ENCODE measurements at regions of chr2 and their contacts with region 1.

Region 1: GRCh38 chr2:64523666-64524603 is at the start of gene AFTPH:
- DNase-seq: peak; percentile 98
- ATAC-seq: peak; percentile 86
- H3K4me3 ChIP-seq: peak within 1 kb of the TSS; percentile 95
- H3K27ac ChIP-seq: peak within 1 kb of the TSS; percentile 94
- H3K4me1 ChIP-seq: peaks cover 11% of the 10 kb centered on the region
- H3K27me3 ChIP-seq: no peaks in the 10 kb centered on the region
- CTCF ChIP-seq: no peak
- EP300 ChIP-seq: peak in 1 of 2 experiments; percentile 53; a peak in 2 of 4 replicates
- POLR2A ChIP-seq: peak; percentile 84
- RAD21 ChIP-seq: no peak
- polyA plus RNA-seq, gene AFTPH: 25.6 to 38.7 TPM

Region 2: DNA sequence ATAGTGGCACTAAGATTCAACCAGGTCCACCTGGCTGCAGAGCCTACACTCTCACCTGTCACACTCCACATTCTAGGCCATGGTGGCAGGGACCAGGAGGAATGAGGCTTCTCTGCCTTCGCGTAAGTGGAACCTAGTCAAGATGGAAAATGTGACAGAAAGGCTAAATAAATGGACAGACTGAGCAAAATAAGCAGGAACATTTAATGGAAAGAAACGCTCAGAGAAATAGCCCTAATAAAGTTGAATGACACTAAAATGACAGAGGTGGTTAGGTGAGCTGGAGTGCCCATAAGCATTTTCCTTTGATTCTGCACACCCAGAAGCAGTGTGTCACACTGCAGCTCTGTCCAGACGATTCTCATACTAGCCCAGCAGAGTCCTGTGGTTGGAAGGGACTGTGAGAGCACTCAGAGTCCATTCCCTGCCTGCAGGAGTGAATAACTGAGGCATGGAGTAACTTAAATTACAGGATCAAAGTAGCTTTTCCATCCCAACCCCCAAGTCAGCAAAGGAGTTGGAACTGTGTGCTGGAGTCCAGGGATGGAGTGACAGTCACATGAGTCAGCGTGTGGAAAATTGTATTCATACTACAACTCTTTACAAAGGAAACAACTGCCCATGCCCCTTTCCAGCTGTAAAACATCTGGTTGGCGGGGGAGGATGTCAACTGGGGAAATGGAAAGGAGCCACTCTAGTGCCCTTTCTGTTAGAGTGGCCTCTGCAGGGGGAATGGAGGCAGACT is 175.4 kb before region 1 on chr2:
- CTCF ChIA-PET with region 1: no interaction called
- POLR2A ChIA-PET with region 1: no interaction called
- RAD21 ChIA-PET with region 1: no interaction called
- SMC1A ChIA-PET with region 1: no interaction called
- in situ Hi-C with region 1: no loop called
- intact Hi-C with region 1: no loop called
- DNase-seq: no peak
- ATAC-seq: no peak
- H3K4me3 ChIP-seq: no peak overlapping the region
- H3K27ac ChIP-seq: no peak overlapping the region
- H3K4me1 ChIP-seq: no peaks in the 10 kb centered on the region
- H3K27me3 ChIP-seq: no peaks in the 10 kb centered on the region
- CTCF ChIP-seq: no peak
- EP300 ChIP-seq: no peak
- POLR2A ChIP-seq: no peak
- RAD21 ChIP-seq: no peak

Region 3: DNA sequence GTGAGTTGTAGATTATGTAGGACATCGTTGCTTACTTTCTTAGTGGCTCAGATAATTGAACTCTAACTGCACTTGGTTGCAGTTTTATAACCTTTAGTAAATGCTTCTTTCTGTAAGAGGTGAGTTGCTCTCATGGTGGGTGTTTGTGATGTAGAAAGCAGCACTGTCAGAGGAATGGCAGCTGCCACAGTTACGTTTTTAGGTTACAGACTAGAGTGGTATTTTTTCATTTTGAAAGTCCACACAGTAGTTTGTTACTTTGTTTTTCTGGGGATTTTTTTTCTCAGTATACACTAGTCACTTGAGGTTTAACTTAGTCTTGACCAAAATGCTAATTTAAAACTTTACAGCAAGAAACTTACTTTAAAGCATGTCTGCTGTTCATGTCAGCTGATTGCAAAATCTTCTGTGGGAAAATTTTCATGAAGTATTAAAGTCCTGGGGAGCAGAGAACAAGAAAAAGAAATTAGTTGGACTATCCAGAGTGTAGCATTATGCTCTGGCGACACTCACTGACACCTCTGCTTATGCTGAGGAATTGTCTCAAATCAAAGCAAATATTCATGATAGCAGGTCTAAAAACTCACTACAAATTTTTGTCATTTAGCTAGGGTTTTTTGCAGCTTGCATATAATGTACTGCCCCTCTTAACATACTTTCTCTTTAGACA is 15.0 kb after region 1 on chr2:
- CTCF ChIA-PET with region 1: interaction called, 39 read pairs
- POLR2A ChIA-PET with region 1: interaction called, 15 read pairs
- RAD21 ChIA-PET with region 1: interaction called, 48 read pairs
- SMC1A ChIA-PET with region 1: interaction called, 59 read pairs
- in situ Hi-C with region 1: no loop called
- intact Hi-C with region 1: no loop called
- DNase-seq: peak; percentile 49
- ATAC-seq: peak; percentile 57
- H3K4me3 ChIP-seq: peak overlapping the region; percentile 14; the same call in 1 of the 2 replicates
- H3K27ac ChIP-seq: peak overlapping the region; percentile 71
- H3K4me1 ChIP-seq: peaks cover 48% of the 10 kb centered on the region; the same call in 1 of the 2 replicates
- H3K27me3 ChIP-seq: no peaks in the 10 kb centered on the region
- CTCF ChIP-seq: no peak
- EP300 ChIP-seq: no peak
- POLR2A ChIP-seq: no peak
- RAD21 ChIP-seq: no peak

Region 4: GRCh38 chr2:64574871-64575270 is 50.9 kb after region 1 on chr2:
- CTCF ChIA-PET with region 1: interaction called, 64 read pairs
- POLR2A ChIA-PET with region 1: interaction called, 6 read pairs
- RAD21 ChIA-PET with region 1: interaction called, 6 read pairs
- SMC1A ChIA-PET with region 1: interaction called, 8 read pairs
- in situ Hi-C with region 1: no loop called
- intact Hi-C with region 1: no loop called
- DNase-seq: no peak
- ATAC-seq: no peak
- H3K4me3 ChIP-seq: no peak overlapping the region
- H3K27ac ChIP-seq: no peak overlapping the region
- H3K4me1 ChIP-seq: no peaks in the 10 kb centered on the region
- H3K27me3 ChIP-seq: no peaks in the 10 kb centered on the region
- CTCF ChIP-seq: no peak
- EP300 ChIP-seq: no peak
- POLR2A ChIP-seq: no peak
- RAD21 ChIP-seq: no peak

Region 5: DNA sequence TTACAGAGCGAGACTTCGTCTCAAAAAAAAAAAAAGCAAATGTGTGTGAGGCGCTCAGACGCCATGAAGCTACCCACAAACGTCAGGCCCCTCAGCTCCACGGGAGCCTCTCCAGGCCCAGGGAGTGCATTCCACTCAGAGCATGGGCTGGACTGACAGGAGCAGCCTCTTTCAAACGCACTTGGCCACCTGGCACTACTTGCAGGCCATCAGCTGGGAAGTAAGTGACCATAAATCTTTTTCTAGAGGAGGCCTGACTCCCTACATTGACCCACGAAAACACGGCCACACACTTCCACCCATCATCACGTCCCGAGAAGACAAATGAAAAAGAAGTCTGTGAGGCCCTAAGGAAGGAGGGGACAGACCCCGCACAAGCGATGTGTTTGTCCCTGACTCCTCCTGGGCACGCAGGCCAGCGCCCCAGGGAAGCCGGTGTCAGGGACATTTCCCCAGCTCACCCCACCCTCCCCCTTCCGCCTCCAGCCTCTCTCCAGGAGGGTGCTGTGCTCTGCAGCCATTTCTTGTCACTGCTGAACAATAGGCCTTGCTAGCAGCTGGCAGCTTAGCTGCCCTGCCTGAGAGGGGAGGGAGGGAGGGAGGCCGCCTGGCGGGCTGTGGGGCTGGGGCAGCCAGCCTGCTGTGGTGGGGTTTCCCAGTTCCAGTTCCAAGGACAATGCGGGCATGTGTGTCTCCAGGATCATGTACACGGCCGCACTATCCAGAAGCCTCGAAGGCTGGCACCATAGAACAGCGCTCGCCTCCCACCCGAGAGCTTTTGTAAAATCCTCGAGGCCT is 103.2 kb after region 1 on chr2:
- CTCF ChIA-PET with region 1: interaction called, 13 read pairs
- POLR2A ChIA-PET with region 1: no interaction called
- RAD21 ChIA-PET with region 1: interaction called, 3 read pairs
- SMC1A ChIA-PET with region 1: interaction called, 3 read pairs
- in situ Hi-C with region 1: no loop called
- intact Hi-C with region 1: no loop called
- DNase-seq: no peak
- ATAC-seq: no peak
- H3K4me3 ChIP-seq: no peak overlapping the region
- H3K27ac ChIP-seq: no peak overlapping the region
- H3K4me1 ChIP-seq: peaks cover 8% of the 10 kb centered on the region
- H3K27me3 ChIP-seq: no peaks in the 10 kb centered on the region
- CTCF ChIP-seq: no peak
- EP300 ChIP-seq: no peak
- POLR2A ChIP-seq: no peak
- RAD21 ChIP-seq: no peak

Region 6: DNA sequence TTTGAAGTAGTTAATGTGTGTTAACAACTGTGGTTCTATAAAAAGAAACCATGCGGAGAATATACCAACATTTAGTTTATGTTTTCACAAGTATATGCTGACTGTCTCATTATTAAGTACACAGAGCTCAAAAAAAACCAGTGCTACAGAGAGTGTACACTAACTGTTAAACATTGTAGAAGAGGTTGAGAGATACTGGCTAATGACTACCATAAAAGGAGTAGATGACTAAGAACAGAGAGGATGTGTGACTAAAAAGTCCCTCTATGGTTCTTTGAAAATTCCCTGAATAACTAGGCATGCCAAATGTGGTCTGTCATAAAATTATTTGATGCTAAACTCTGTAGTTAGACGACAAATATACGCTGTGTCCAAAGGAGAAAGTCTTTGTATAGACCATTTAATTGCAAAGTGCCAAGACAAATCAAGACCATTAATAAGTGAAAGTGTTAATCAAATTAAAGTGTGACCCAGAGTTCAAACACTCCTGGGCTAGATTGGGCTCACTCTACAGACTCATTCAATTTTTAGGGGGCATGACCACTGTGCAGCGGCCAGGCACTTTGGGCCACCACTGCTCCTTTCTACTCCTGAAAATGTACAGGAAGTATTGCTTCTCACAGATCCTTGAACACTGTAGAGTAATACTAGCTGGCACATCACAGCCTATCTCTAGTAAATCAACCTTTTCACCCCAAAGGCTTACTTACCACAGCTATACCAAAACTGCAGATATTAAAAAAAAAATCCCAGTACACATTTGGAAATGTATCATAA is 174.9 kb after region 1 on chr2:
- CTCF ChIA-PET with region 1: interaction called, 4 read pairs
- POLR2A ChIA-PET with region 1: interaction called, 4 read pairs
- RAD21 ChIA-PET with region 1: interaction called, 4 read pairs
- SMC1A ChIA-PET with region 1: interaction called, 12 read pairs
- in situ Hi-C with region 1: no loop called
- intact Hi-C with region 1: loop called (anchors 2 kb)
- DNase-seq: peak; percentile 83
- ATAC-seq: peak; percentile 90
- H3K4me3 ChIP-seq: no peak overlapping the region; the same call in 1 of the 2 replicates
- H3K27ac ChIP-seq: peak overlapping the region; percentile 98
- H3K4me1 ChIP-seq: peaks cover 53% of the 10 kb centered on the region
- H3K27me3 ChIP-seq: no peaks in the 10 kb centered on the region
- CTCF ChIP-seq: no peak
- EP300 ChIP-seq: peak; percentile 41 to 84; a peak in 2 of 4 replicates
- POLR2A ChIP-seq: no peak
- RAD21 ChIP-seq: no peak

Region 7: DNA sequence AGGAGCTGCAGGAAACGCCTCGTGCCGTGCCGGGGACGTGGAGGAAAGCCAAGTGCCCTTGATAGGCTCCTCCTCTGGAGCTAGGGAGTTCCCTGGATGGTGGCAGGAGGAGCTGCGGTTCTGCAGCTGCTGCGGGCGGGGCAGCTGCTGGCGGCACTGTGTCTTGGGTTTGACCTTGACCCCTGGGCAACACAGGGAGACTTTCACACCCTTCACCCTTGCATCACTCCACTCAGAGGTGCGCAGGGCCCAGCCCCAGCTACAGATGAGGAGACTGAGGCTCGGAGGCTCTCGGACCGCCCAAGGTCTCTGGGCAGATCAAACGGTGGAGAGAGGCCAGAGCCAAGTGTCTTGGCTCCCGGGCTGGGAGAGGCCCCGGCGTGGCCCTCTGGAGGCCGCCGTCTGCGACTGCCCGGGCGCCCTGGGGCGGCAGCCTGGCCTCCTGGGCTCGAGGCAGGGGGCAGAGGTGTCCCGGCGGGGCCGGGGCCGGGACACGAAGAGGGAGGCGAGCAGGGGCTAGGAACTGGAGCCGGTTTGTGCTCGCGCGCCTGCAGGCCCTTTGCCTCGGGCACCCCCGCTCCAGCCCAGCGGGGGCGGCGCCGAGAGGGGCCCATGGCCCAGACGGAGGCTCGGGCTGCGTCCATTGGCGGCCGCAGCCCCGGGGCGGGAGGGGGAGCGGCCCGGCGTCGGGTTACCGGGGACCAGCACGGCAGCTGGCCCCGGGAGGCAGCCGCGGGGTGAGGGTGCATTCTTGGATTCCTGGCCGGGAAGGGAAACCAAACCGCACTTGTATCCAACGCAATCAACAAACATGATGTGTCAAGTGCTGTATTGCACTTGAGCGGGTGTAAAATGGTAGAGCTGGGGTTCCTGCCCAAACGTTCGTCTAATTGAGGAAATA is 335.6 kb after region 1 on chr2:
- CTCF ChIA-PET with region 1: interaction called, 21 read pairs
- POLR2A ChIA-PET with region 1: interaction called, 3 read pairs
- RAD21 ChIA-PET with region 1: interaction called, 19 read pairs
- SMC1A ChIA-PET with region 1: interaction called, 52 read pairs
- in situ Hi-C with region 1: loop called (anchors 5 kb)
- intact Hi-C with region 1: loop called (anchors 2 kb)
- DNase-seq: no peak
- ATAC-seq: peak; percentile 53
- H3K4me3 ChIP-seq: peak overlapping the region; percentile 65
- H3K27ac ChIP-seq: peak overlapping the region; percentile 91
- H3K4me1 ChIP-seq: peaks cover 54% of the 10 kb centered on the region
- H3K27me3 ChIP-seq: no peaks in the 10 kb centered on the region
- CTCF ChIP-seq: no peak
- EP300 ChIP-seq: no peak
- POLR2A ChIP-seq: peak; percentile 40
- RAD21 ChIP-seq: no peak

Region 8: GRCh38 chr2:65031341-65032018 is 507.5 kb after region 1 on chr2:
- CTCF ChIA-PET with region 1: interaction called, 13 read pairs
- POLR2A ChIA-PET with region 1: no interaction called
- RAD21 ChIA-PET with region 1: interaction called, 3 read pairs
- SMC1A ChIA-PET with region 1: interaction called, 4 read pairs
- in situ Hi-C with region 1: no loop called
- intact Hi-C with region 1: loop called (anchors 5 kb)
- DNase-seq: no peak
- ATAC-seq: peak; percentile 41
- H3K4me3 ChIP-seq: peak overlapping the region; percentile 46
- H3K27ac ChIP-seq: peak overlapping the region; percentile 73
- H3K4me1 ChIP-seq: peaks cover 51% of the 10 kb centered on the region
- H3K27me3 ChIP-seq: no peaks in the 10 kb centered on the region
- CTCF ChIP-seq: no peak
- EP300 ChIP-seq: no peak
- POLR2A ChIP-seq: no peak
- RAD21 ChIP-seq: no peak

Measured in GM12878 (cell line).